Activated naive CD4-positive, alpha-beta T cell treated with anti-CD3 and anti-CD28 coated beads, Interleukin-2, amount 10 ng/mL, durations not matched to agents 7 days and 5 days (primary cell): ENCODE measurements at regions of chr12 and their contacts with region 1.

Region 1: DNA sequence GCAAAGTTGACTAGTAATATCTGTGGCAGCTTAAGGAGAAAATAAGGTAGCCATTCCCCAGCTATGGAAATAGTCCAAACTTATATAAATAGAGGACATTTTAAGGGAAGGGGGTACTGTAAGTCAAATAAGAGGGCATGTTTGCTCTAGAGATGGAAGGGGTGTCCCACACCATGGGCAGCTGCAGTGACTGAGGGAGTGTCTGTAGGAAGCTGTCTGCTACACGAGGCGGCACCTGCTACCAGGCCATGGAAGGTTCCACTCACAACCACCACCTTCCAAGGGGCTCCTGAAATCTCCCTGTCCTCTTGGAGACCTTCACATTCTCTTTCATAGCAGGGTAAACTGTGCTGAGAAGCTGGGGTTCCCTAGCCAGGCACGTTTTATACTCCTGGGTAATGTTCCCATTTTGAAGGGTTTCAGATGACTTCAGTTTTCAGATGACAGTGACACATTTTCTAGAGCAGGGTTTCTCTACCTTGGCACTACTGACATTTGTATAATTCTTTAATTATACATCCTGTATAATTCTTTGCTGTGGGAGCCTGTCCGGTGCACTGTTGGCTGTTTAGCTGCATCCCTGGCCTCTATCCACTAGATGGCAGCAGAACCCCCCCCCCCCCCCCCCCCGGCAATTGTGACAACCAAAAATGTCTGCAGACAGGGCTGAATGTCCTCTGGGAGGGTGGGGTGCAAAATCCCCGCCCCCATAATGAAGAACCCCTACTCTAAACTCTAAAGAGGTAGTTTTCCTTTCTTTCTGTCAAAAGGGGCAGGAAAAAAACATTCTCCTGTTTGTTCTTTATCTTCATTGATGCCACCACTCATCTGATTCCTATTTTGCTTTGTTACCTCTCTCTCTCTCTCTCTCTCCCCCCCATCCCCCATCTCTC is 11.6 kb upstream of the SMCO2 start:
- DNase-seq: peak; percentile 43
- H3K4me3 Mint-ChIP-seq: no peak overlapping the region
- H3K27ac Mint-ChIP-seq: no peak overlapping the region
- H3K4me1 Mint-ChIP-seq: peaks cover 58% of the 10 kb centered on the region
- H3K27me3 Mint-ChIP-seq: peaks cover 11% of the 10 kb centered on the region

Region 2: DNA sequence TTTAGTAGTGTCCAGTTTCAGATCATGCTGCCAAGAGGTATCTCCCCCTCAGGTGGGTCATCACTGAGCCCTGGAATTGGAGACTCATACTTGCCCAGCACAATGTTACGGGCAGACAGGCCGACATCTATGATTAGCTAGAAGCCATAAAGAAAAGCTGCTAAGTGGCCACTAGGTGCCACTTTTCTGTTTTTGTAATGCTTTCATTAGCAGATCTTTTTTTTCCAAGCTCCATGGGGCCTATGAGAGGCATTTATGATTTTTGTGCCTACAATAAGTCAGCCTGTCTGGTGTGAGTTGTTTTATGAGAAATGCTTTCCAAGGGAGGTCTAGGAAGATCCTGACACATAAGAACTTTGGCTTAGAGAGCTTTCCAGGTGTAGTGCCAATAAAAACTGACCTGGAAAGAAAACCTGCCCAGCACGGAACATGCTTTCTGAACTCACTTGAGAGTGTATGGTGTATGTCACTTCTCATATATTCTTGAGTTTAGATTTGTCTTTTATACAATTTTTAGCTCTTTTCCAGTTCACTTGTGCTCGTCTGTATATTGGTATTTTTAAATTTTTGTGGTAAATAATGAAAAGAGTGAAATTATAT is 10.2 kb before region 1 on chr12:
- CTCF ChIA-PET with region 1: interaction called, 10 read pairs
- DNase-seq: peak; percentile 29
- H3K4me3 Mint-ChIP-seq: no peak overlapping the region
- H3K27ac Mint-ChIP-seq: no peak overlapping the region
- H3K4me1 Mint-ChIP-seq: peaks cover 8% of the 10 kb centered on the region
- H3K27me3 Mint-ChIP-seq: no peaks in the 10 kb centered on the region

Region 3: GRCh38 chr12:27488479-27488878 is 53.6 kb after region 1 on chr12:
- CTCF ChIA-PET with region 1: interaction called, 19 read pairs
- DNase-seq: no peak
- H3K4me3 Mint-ChIP-seq: no peak overlapping the region
- H3K27ac Mint-ChIP-seq: no peak overlapping the region
- H3K4me1 Mint-ChIP-seq: peaks cover 7% of the 10 kb centered on the region
- H3K27me3 Mint-ChIP-seq: no peaks in the 10 kb centered on the region

Region 4: DNA sequence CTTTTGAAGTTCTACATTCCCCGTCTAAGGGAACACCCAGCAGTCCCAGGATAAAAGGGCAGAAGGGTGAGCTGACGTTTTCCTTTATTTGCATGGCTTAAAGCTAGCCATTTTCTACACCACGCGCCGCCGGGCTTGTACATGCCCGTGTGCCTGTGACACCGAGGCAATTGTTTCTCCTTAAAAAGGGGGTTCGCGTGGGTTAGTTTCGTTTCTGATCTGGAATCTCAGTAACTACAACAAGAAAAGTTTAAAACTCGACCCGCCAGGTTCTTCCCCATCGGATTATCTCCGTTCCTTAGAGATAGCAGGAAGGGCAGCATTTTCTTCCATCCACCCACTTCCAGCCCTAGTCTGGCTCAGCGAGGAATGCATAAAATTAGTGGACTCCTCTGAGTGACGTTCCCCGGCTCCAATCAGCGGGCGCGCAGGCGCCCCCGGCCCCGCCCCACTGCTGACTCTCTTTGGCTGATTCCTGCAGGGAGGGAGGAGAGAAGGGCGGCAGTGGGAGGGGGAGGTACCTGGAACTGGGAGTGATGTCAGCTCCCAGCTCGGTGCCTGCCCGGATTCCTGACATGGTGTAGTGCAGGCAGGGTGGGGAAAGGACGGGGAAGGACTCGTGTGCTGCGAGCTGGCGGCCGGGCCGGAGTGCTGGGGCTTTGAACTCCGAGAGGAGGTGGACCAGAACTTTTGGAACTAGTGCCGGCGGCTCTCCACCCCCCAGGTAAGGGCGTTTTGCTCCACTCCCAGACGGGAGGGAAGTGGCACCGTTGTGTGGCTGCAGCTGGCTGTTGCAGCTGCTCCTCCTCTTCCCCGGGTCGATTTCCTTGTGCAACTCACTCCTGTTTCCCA is 88.9 kb after region 1 on chr12 and contains the start of gene PPFIBP1:
- CTCF ChIA-PET with region 1: interaction called, 31 read pairs
- DNase-seq: peak; percentile 99
- H3K4me3 Mint-ChIP-seq: peak within 1 kb of the TSS; percentile 94
- H3K27ac Mint-ChIP-seq: peak within 1 kb of the TSS; percentile 90
- H3K4me1 Mint-ChIP-seq: peaks cover 40% of the 10 kb centered on the region
- H3K27me3 Mint-ChIP-seq: peaks cover 32% of the 10 kb centered on the region

Region 5: GRCh38 chr12:27733052-27733656 is 298.2 kb after region 1 on chr12:
- CTCF ChIA-PET with region 1: no interaction called
- DNase-seq: peak; percentile 52
- H3K4me3 Mint-ChIP-seq: no peak overlapping the region
- H3K27ac Mint-ChIP-seq: no peak overlapping the region
- H3K4me1 Mint-ChIP-seq: no peaks in the 10 kb centered on the region
- H3K27me3 Mint-ChIP-seq: no peaks in the 10 kb centered on the region